ENCODE measurements at regions of chr19 and their contacts with region 1.

Region 1: DNA sequence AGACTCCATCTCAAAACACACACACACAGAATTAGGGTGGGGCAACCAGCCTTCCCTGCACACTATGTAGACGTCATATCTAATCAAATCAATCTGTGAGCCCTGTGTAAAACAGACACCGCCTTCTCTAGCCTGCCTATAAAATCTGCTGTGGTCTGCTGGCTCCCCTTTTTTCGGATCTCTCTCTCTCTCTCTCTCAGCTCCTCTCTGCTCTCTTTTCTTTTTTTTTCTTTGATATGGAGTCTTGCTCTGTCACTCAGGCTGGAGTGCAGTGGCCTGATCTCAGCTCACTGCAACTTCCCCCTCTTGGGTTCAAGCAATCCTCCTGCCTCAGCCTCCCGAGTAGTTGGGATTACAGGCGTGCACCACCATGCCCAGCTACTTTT is 11.8 kb upstream of the CD70 start:
- DNase-seq: peak; percentile 87
- H3K4me3 ChIP-seq: peak overlapping the region; percentile 74
- H3K27ac ChIP-seq: peak overlapping the region; percentile 92
- H3K4me1 ChIP-seq: peaks cover 78% of the 10 kb centered on the region
- CTCF ChIP-seq: no peak

Region 2: DNA sequence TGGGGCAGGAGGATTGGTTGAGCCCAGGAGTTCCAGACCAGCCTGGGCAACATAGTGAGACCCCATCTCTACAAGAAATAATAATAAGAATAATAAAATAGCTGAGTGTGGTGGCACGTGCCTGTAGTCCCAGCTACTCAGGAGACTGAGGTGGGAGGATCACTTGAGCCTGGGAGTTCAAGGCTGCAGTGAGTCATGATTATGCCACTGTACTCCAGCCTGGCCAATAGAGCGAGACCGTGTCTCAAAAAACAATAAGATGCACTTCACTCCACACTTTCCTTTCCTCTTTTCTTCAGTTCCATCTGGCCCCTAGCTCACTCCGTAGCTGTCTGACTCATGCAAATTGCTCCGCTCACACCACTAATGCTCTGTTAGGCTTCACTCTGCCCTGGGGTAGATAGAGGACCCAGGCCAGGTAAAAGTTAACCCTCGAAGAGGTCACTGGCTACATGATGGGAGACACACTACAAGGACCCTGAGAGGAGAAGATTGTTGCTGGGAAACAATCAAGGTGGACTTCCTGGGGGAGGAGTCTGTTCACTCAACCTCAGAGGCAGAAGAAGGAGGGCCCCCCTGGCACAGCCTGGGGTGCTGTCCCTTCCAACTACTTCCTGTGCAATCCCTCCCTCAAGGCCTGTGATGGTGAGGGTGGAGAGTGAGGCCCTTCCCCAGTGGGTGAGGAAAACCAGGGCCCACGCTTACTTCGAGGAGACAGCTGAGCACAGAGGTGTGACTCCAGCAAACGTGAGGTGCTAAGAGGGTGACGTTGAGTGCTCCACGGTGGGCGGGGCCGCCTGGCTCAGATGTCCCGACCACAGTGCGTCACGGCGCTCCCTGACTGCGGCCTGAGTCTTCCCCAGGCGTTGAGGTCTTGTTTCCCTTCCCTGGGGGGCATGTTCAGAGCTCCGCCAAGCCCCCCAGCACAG is 80.7 kb before region 1 on chr19:
- CTCF ChIA-PET with region 1: interaction called, 3 read pairs
- POLR2A ChIA-PET with region 1: interaction called, 14 read pairs
- intact Hi-C with region 1: no loop called
- DNase-seq: peak; percentile 91
- H3K4me3 ChIP-seq: peak overlapping the region; percentile 60
- H3K27ac ChIP-seq: peak overlapping the region; percentile 90
- H3K4me1 ChIP-seq: peaks cover 81% of the 10 kb centered on the region
- CTCF ChIP-seq: no peak